Activated B cell treated with CpG ODN at 0.5 μM for 24 hours (primary cell): ENCODE measurements at regions of chr7 and their contacts with region 1.

Region 1: DNA sequence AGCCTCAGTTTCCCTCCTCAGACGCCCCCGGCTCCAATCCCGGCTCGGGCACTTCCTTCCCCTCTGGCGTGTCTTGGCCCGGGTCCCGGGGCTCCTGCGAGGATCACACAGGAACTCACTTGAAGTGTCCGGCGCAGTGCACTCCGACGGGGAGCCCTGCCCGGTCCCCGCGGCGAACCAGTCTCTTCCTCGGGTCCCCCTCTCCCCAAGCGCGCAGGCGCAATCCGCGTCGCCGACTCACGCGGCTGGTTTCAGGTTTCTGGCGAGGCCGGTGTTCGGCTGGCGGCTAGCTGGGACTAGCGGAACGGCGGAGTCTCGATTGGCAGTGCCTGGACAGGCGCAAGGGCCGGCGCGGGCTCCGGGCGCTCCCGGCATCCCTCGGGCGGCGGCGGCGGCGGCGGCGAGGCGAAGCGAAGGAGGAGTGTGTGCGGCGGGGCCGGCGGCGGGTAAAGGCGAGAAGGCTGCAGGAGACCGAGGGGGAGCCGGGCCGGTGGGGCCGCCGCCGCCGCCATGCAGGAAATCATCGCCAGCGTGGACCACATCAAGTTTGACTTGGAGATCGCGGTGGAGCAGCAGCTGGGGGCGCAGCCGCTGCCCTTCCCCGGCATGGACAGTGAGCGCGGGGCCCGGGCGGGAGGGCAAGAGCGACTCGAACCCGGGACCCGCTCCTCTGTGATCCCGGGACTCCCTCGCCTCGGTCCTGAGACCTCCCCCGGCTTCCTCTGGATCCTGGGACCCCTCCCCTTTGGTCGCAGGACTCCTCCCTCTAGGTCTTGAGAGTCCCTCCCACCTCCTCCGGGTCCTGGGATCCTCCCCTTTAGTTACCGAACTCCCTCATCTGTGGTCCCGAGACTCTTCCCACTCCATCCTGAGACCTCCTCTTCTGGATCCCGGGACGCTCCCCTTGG is at the starts of genes CPSF4 and PTCD1:
- DNase-seq: peak; percentile 84
- ATAC-seq: peak; percentile 94
- H3K4me3 Mint-ChIP-seq: peak within 1 kb of the TSS; percentile 98
- H3K27ac Mint-ChIP-seq: peak within 1 kb of the TSS; percentile 94
- H3K4me1 Mint-ChIP-seq: peaks cover 32% of the 10 kb centered on the region
- H3K27me3 Mint-ChIP-seq: no peaks in the 10 kb centered on the region
- CTCF ChIP-seq: no peak
- total RNA-seq, gene CPSF4: 46.2 and 60.9 TPM in 2 replicates
- total RNA-seq, gene PTCD1: 8.4 and 13.4 TPM in 2 replicates

Region 2: DNA sequence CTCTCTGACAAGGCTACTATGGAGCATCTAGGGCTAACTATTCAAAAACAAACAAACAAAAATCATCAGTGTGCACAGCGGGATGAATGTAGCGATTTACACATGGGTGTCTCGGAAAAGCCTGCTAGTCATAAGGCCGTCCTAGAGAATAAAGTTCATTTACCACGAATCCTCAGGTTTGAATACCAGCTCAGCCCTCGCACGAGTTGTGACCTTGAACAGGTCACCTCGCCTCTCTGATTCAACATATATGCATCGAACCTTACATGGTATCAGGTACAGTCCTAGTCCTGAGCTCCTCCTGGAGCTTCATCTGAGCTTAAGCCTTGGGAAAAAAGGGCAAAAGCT is 26.6 kb after region 1 on chr7:
- CTCF ChIA-PET with region 1: no interaction called
- POLR2A ChIA-PET with region 1: interaction called, 6 read pairs
- intact Hi-C with region 1: loop called (anchors 1 kb)
- DNase-seq: no peak
- ATAC-seq: no peak
- H3K4me3 Mint-ChIP-seq: peak overlapping the region; percentile 96
- H3K27ac Mint-ChIP-seq: peak overlapping the region; percentile 90
- H3K4me1 Mint-ChIP-seq: peaks cover 36% of the 10 kb centered on the region
- H3K27me3 Mint-ChIP-seq: no peaks in the 10 kb centered on the region
- CTCF ChIP-seq: no peak

Region 3: GRCh38 chr7:99558306-99559174 is 119.7 kb after region 1 on chr7 and contains the start of gene ZNF655:
- CTCF ChIA-PET with region 1: no interaction called
- POLR2A ChIA-PET with region 1: interaction called, 8 read pairs
- intact Hi-C with region 1: loop called (anchors 2 kb)
- DNase-seq: peak; percentile 85
- ATAC-seq: peak; percentile 79
- H3K4me3 Mint-ChIP-seq: peak within 1 kb of the TSS; percentile 97
- H3K27ac Mint-ChIP-seq: peak within 1 kb of the TSS; percentile 97
- H3K4me1 Mint-ChIP-seq: peaks cover 49% of the 10 kb centered on the region
- H3K27me3 Mint-ChIP-seq: no peaks in the 10 kb centered on the region
- CTCF ChIP-seq: no peak
- total RNA-seq, gene ZNF655: 98.5 and 116 TPM in 2 replicates

Region 4: DNA sequence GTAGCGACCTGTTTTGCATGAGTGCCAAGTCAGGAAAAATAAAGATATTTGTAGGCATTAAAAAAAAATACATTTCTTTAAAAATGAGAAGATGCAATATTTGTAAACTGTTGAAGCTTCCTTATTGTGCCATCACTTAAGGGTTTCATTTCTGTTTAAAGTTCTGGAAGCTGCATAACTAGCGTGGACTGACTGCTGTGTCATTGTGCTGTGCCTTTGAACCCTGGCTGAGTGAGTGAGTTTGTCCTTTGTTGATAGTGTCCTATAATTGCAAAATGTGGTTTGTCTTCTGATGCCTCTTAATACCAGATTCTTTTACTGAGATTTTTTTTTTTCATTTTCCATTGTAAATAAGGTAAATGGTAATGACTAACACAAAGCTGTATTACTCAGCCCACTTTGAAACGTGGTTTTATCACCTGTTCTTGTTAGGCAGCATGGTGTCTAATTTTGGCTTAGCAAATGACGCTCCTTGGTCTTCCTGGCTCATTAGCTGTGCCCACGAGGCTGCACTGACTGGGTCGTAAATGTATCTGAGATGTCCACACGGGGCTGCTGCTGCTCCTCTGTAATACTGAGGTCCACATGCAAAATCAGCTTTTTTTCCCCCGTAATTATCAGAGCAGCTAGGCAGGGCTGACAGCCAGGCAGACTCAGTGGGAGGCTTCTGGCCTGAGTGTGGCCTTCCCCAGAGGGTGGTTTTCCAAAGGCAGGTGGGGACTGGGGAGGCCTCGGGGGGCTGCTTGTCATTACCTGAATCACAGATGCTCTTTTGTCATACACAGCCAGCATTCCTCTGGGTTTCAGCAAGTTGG is 192.7 kb after region 1 on chr7:
- CTCF ChIA-PET with region 1: no interaction called
- POLR2A ChIA-PET with region 1: no interaction called
- intact Hi-C with region 1: no loop called
- DNase-seq: no peak
- ATAC-seq: no peak
- H3K4me3 Mint-ChIP-seq: no peak overlapping the region
- H3K27ac Mint-ChIP-seq: no peak overlapping the region
- H3K4me1 Mint-ChIP-seq: no peaks in the 10 kb centered on the region
- H3K27me3 Mint-ChIP-seq: no peaks in the 10 kb centered on the region
- CTCF ChIP-seq: no peak

Region 5: DNA sequence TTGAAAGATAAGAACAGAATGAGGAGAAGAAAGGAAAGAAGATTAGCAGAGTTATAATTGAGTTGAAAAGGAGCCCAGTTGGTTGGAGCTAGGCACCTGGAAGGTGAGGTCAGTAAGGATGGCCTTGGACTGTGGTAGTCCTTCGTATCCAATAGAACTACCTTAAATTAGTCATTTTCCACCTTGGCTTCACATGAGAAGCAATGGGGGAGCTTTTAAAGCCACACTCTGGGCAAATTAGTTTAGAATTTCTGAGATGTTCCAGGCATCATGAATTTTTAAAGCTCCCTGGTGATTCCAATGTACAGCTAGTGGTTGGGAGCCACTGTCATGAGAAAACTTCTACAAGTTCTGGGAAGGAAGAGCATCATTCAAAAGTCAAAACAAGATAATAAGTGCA is 268.3 kb after region 1 on chr7:
- CTCF ChIA-PET with region 1: no interaction called
- POLR2A ChIA-PET with region 1: no interaction called
- intact Hi-C with region 1: no loop called
- DNase-seq: no peak
- ATAC-seq: no peak
- H3K4me3 Mint-ChIP-seq: no peak overlapping the region
- H3K27ac Mint-ChIP-seq: no peak overlapping the region
- H3K4me1 Mint-ChIP-seq: no peaks in the 10 kb centered on the region
- H3K27me3 Mint-ChIP-seq: peaks cover 3% of the 10 kb centered on the region
- CTCF ChIP-seq: no peak

Region 6: GRCh38 chr7:99794585-99795502 is 356.0 kb after region 1 on chr7:
- CTCF ChIA-PET with region 1: no interaction called
- POLR2A ChIA-PET with region 1: no interaction called
- intact Hi-C with region 1: no loop called
- DNase-seq: no peak
- ATAC-seq: no peak
- H3K4me3 Mint-ChIP-seq: no peak overlapping the region
- H3K27ac Mint-ChIP-seq: no peak overlapping the region
- H3K4me1 Mint-ChIP-seq: no peaks in the 10 kb centered on the region
- H3K27me3 Mint-ChIP-seq: peaks cover 41% of the 10 kb centered on the region
- CTCF ChIP-seq: no peak